Prostate gland (tissue), 2 donors: ENCODE measurements at regions of chr2 and their contacts with region 1.

Region 1: DNA sequence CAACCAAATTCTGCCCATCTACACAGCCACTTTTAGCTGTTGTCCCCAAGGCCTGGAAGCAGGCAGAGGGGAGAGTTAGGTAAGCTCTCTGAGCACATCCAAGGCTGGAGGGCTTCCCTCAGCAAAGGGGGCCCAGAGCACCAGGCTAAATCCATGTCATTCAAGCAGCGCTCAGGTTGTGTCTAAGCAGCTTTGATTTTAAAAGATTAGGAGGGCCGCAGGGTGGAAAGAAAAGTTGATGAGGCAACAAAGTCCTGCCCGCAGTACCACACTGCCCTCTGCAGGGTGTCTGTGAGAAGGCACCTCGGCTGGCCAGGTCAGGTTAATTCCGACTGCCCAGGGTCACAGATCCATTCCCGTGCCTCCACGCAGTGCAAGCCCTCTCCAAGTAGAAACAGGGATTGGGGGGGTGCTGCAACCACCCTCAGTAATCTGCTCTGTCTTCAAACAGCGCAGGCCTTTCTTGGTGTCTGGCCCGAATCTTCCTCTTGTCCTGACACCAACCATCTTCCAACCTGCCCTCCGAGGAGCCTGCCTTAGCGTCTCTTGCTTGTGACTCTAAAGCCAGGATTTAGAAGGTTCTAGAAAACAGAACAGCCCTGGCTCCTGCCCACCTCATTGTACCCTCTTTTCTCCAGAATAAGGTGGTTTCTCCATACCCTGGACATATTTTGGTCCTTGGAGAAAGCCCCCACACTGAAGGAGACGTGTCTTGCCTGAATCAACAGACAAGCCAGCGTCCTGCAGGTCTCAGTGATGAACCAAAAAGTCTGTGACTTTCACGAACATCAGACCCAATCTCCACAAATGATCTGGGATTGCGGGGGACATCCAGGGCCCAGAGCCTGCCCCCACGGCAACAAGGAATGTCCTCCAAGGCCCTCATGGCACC is 289.2 kb downstream of the TNS1 start:
- DNase-seq: peak; percentile 64
- H3K4me3 ChIP-seq: no peak overlapping the region
- H3K27ac ChIP-seq: peak overlapping the region; percentile 52 to 54
- H3K4me1 ChIP-seq: no peaks in the 10 kb centered on the region
- H3K27me3 ChIP-seq: no peaks in the 10 kb centered on the region
- CTCF ChIP-seq: peak; percentile 85 to 97 (median 93)
- POLR2A ChIP-seq: no peak

Region 2: GRCh38 chr2:217434181-217434975 is 279.3 kb before region 1 on chr2:
- intact Hi-C with region 1: loop called (anchors 10 kb)
- DNase-seq: peak; percentile 85
- H3K4me3 ChIP-seq: no peak overlapping the region
- H3K27ac ChIP-seq: peak overlapping the region; percentile 16 to 49
- H3K4me1 ChIP-seq: no peaks in the 10 kb centered on the region
- H3K27me3 ChIP-seq: no peaks in the 10 kb centered on the region
- CTCF ChIP-seq: no peak
- POLR2A ChIP-seq: peak; percentile 8

Region 3: DNA sequence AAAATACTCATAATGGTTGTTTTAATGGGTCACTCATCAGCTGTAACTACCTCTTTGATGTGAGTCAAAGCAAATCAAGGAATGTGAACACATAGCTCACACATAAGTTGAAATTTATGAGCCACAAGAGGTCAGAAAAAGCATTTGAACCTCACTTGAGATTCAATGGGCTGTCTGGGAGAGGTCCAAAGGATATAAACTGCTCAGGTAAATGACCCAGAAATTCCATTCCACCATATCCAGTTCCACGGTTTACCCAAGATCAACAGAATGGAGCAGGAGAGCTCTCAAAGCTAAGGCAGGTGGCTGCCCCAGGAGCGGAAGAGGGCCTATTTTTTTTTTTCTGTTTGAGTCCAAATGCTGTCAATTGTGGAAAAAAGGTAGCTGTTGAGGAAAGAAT is 174.9 kb before region 1 on chr2:
- intact Hi-C with region 1: no loop called
- DNase-seq: no peak
- H3K4me3 ChIP-seq: no peak overlapping the region
- H3K27ac ChIP-seq: no peak overlapping the region
- H3K4me1 ChIP-seq: no peaks in the 10 kb centered on the region
- H3K27me3 ChIP-seq: no peaks in the 10 kb centered on the region
- CTCF ChIP-seq: no peak
- POLR2A ChIP-seq: no peak

Region 4: DNA sequence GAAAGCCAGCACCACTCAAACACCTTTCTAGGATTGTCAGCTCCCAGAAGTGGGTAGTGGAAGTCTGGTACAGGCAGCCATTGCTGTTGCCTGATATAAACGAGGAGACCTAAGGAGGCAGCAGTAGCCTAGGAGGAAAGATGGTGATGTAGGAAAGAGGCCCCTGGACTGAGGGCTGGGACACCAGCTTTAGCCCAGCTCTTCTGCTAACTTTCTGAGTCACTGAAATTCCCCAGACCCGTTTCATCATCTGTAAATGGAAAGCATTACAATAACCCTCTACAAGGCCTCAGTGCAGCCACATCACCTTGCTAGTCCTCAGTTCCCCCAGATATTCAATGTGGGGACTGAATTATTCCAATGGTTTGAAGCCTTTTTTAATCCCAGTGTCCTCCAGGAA is 47.3 kb before region 1 on chr2:
- intact Hi-C with region 1: no loop called
- DNase-seq: no peak
- H3K4me3 ChIP-seq: no peak overlapping the region
- H3K27ac ChIP-seq: no peak overlapping the region
- H3K4me1 ChIP-seq: no peaks in the 10 kb centered on the region
- H3K27me3 ChIP-seq: no peaks in the 10 kb centered on the region
- CTCF ChIP-seq: no peak
- POLR2A ChIP-seq: no peak

Region 5: GRCh38 chr2:217756375-217757107 is 42.9 kb after region 1 on chr2:
- intact Hi-C with region 1: loop called (anchors 5 kb)
- DNase-seq: peak; percentile 38
- H3K4me3 ChIP-seq: no peak overlapping the region
- H3K27ac ChIP-seq: no peak overlapping the region
- H3K4me1 ChIP-seq: no peaks in the 10 kb centered on the region
- H3K27me3 ChIP-seq: no peaks in the 10 kb centered on the region
- CTCF ChIP-seq: peak; percentile 58 to 77 (median 69)
- POLR2A ChIP-seq: no peak